ENCODE measurements at regions of chr3 and their contacts with region 1.

Region 1: DNA sequence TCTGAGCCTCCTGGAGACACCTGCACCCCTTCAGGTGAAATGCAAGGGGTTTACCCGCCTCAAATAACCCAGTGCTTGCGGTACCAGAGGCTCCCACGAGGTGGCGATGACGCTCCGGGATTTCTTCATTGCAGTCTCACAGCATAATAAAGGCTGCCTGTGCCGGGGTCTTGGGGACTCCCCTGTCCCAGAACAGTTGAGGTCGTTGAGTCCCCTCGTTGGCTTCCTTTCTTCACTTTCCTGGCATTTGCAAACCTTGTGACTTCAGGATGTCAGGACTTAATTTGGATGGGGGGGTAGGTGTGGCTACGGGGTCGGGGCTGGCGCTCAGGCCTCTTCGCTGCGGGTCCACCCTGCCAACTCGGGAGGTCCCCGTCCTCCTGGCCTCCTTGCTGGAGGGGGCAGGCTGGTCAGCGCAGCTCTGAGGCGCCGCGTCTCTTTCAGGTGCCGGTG is 1.3 kb downstream of the GNAT1 start:
- DNase-seq: no peak
- H3K4me3 ChIP-seq: no peak overlapping the region
- H3K27ac ChIP-seq: no peak overlapping the region
- H3K4me1 ChIP-seq: peaks cover 17 to 57% (median 22%) of the 10 kb centered on the region in 3 donors
- H3K27me3 ChIP-seq: peaks cover 0 to 53% (median 11%) of the 10 kb centered on the region in 4 donors
- CTCF ChIP-seq: peak; percentile 88 to 95 (median 91)
- POLR2A ChIP-seq: no peak

Region 2: GRCh38 chr3:50121416-50122032 is 71.2 kb before region 1 on chr3:
- intact Hi-C with region 1: loop called (anchors 2 kb)
- DNase-seq: no peak
- H3K4me3 ChIP-seq: no peak overlapping the region
- H3K27ac ChIP-seq: peak overlapping the region in 3 of 4 donors; percentile 19 to 51 (median 40)
- H3K4me1 ChIP-seq: peaks cover 29 to 53% (median 35%) of the 10 kb centered on the region in 3 donors
- H3K27me3 ChIP-seq: no peaks in the 10 kb centered on the region
- CTCF ChIP-seq: peak; percentile 78 to 94 (median 88)
- POLR2A ChIP-seq: no peak

Region 3: GRCh38 chr3:50221411-50222168 is 28.9 kb after region 1 on chr3:
- intact Hi-C with region 1: loop called (anchors 2 kb)
- DNase-seq: no peak
- H3K4me3 ChIP-seq: no peak overlapping the region
- H3K27ac ChIP-seq: no peak overlapping the region
- H3K4me1 ChIP-seq: peaks cover 3 to 23% (median 9%) of the 10 kb centered on the region in 3 donors
- H3K27me3 ChIP-seq: peaks cover 0 to 5% (median 0%) of the 10 kb centered on the region in 4 donors
- CTCF ChIP-seq: no peak
- POLR2A ChIP-seq: no peak

Region 4: DNA sequence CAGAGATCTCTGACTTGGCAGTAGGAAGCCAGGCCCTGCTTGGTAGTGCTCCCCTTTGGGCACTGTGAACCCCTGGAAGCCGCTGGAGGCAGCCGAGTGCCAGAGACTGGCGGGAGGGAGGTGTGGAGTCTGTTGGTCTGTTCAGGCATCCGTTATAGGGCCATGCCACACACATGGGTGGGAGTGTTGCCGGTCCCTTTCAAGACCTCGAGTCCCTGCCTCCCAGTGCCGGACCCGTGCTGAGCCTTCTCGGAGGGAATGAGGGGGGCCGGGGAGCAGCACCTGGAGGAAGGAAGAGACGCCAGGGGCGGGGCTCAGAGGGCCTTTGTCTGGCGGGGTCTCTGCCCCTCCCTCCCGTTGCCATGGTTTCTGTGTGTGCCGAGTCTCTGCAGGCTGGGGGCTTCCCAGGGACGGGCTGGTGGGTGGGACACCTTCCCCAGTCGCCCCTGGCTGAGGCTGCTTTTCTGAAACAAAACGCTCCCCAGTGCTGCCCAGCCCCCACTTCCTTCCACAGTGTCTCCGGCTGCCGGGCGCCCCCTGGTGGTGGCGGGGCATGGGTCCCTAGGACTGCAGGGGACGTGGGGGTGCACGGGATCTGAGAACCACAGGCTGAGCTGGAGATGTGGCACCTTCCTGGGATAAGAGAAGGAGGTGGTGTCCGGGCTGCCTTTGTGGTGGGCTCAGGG is 53.3 kb after region 1 on chr3:
- intact Hi-C with region 1: no loop called
- DNase-seq: peak; percentile 47
- H3K4me3 ChIP-seq: peak overlapping the region; percentile 32 to 66 (median 44)
- H3K27ac ChIP-seq: peak overlapping the region; percentile 87 to 97 (median 92)
- H3K4me1 ChIP-seq: peaks cover 79 to 100% (median 90%) of the 10 kb centered on the region in 3 donors
- H3K27me3 ChIP-seq: no peaks in the 10 kb centered on the region
- CTCF ChIP-seq: peak; percentile 97 to 99 (median 98)
- POLR2A ChIP-seq: no peak

Region 5: DNA sequence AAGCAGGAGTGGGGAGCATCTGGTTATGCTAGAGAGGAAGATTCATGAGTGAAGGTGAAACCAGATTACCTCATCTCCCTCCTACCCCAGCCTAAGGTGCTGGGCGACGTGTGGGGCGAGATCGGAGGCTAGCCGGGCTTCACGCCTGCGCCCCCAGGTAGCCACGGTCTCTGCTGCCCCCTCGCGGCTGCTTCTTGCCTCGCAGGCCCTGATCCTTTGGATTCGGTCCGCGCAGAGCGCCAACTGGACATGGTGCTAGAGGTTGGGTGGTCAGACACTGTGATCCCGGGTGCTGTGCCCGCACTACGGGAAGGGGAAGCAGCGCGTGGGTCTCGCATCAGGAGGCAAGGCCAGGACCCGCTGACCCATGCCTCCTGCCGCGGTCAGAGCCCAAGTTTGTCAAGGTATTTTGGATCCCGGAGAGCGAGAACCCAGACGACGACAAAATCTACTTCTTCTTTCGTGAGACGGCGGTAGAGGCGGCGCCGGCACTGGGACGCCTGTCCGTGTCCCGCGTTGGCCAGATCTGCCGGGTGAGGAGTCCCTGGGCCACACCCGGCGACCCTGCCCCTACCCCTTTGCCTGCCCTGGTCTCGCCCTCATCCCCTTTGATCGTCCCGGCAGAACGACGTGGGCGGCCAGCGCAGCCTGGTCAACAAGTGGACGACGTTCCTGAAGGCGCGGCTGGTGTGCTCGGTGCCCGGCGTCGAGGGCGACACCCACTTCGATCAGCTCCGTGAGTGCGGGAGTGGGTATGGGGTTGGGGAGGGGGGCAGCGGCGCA is 80.4 kb after region 1 on chr3:
- intact Hi-C with region 1: loop called (anchors 5 kb)
- DNase-seq: no peak
- H3K4me3 ChIP-seq: peak overlapping the region; percentile 18 to 63 (median 40)
- H3K27ac ChIP-seq: peak overlapping the region in 2 of 4 donors; percentile 43 to 49
- H3K4me1 ChIP-seq: peaks cover 22 to 74% (median 48%) of the 10 kb centered on the region in 3 donors
- H3K27me3 ChIP-seq: peaks cover 0 to 40% (median 3%) of the 10 kb centered on the region in 4 donors
- CTCF ChIP-seq: peak; percentile 97 to 100 (median 99)
- POLR2A ChIP-seq: no peak

Measured in esophagus squamous epithelium (tissue), 5 donors.